ENCODE measurements at regions of chrX and their contacts with region 1.

Region 1: DNA sequence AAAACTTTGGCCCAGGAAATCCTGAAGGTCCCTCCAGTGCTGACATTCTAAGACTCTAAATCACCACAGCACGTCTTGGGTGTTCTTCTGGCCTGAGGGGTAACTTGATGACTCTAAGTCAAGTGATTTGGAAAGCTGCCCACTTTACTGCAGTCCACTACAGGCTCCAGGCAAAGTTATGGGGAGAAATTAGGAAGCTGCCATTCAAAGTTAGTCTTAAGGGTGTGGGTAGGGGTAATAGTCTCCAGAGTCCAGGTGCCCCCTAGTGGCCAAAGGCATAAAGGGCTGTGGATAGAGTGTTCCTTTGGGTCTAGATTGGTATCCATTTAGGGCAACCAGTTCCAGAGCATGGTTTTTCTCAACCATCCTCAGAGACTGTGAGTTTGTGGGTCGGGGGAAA is 38.7 kb upstream of the SLC16A2 start:
- DNase-seq: peak; percentile 52
- ATAC-seq: peak; percentile 96
- H3K4me3 ChIP-seq: no peak overlapping the region
- H3K27ac ChIP-seq: peak overlapping the region; percentile 48; the same call in 1 of the 2 replicates
- H3K4me1 ChIP-seq: peaks cover 9% of the 10 kb centered on the region
- H3K27me3 ChIP-seq: no peaks in the 10 kb centered on the region
- CTCF ChIP-seq: peak; percentile 84

Region 2: GRCh38 chrX:73867144-73867543 is 515.5 kb before region 1 on chrX:
- CTCF ChIA-PET with region 1: no interaction called
- POLR2A ChIA-PET with region 1: no interaction called
- in situ Hi-C with region 1: no loop called
- intact Hi-C with region 1: no loop called
- DNase-seq: no peak
- ATAC-seq: no peak
- H3K4me3 ChIP-seq: no peak overlapping the region
- H3K27ac ChIP-seq: no peak overlapping the region
- H3K4me1 ChIP-seq: no peaks in the 10 kb centered on the region
- H3K27me3 ChIP-seq: no peaks in the 10 kb centered on the region
- CTCF ChIP-seq: no peak

Region 3: GRCh38 chrX:74218895-74219294 is 163.7 kb before region 1 on chrX:
- CTCF ChIA-PET with region 1: no interaction called
- POLR2A ChIA-PET with region 1: no interaction called
- in situ Hi-C with region 1: no loop called
- intact Hi-C with region 1: no loop called
- DNase-seq: no peak
- ATAC-seq: no peak
- H3K4me3 ChIP-seq: no peak overlapping the region
- H3K27ac ChIP-seq: no peak overlapping the region
- H3K4me1 ChIP-seq: no peaks in the 10 kb centered on the region; the same call in 1 of the 2 replicates
- H3K27me3 ChIP-seq: no peaks in the 10 kb centered on the region
- CTCF ChIP-seq: no peak

Region 4: GRCh38 chrX:74450803-74451449 is 68.3 kb after region 1 on chrX:
- CTCF ChIA-PET with region 1: no interaction called
- POLR2A ChIA-PET with region 1: no interaction called
- in situ Hi-C with region 1: no loop called
- intact Hi-C with region 1: loop called (anchors 10 kb)
- DNase-seq: peak; percentile 27
- ATAC-seq: peak; percentile 46; the same call in 1 of the 2 replicates
- H3K4me3 ChIP-seq: no peak overlapping the region
- H3K27ac ChIP-seq: no peak overlapping the region
- H3K4me1 ChIP-seq: no peaks in the 10 kb centered on the region; the same call in 1 of the 2 replicates
- H3K27me3 ChIP-seq: no peaks in the 10 kb centered on the region
- CTCF ChIP-seq: no peak

Region 5: DNA sequence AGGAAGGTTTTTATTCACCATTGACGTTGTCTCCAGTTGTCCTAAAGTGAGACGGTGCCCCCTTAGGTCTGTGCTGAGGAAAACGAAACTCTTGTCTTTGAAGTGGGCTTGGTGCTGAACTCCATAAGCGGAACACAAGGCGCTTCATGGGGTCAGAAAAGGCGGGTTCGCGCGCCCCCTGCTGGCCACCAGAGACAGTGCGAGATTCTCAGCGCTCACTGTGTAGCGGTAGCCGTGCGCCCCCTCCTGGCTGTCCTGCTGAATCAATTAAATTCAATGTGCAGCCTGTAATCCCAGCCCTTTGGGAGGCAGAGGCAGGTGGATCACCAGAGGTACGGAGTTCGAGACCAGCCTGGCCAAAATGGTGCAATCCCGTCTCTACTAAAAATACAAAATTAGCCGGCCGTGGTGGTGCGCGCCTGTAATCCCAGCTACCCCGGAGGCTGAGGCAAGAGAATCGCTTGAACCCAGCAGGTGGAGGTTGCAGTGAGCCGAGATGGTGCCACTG is 167.7 kb after region 1 on chrX:
- CTCF ChIA-PET with region 1: interaction called, 3 read pairs
- POLR2A ChIA-PET with region 1: interaction called, 5 read pairs
- in situ Hi-C with region 1: no loop called
- intact Hi-C with region 1: loop called (anchors 1 kb)
- DNase-seq: no peak
- ATAC-seq: peak; percentile 93
- H3K4me3 ChIP-seq: peak overlapping the region in 1 of 2 experiments; percentile 32; a peak in 2 of 4 replicates
- H3K27ac ChIP-seq: no peak overlapping the region
- H3K4me1 ChIP-seq: no peaks in the 10 kb centered on the region
- H3K27me3 ChIP-seq: no peaks in the 10 kb centered on the region
- CTCF ChIP-seq: peak; percentile 98

Measured in Panc1 (cell line).